IMR-90 (cell line): ENCODE measurements at regions of chr3 and their contacts with region 1.

Region 1: GRCh38 chr3:128170805-128171516 is 17.7 kb downstream of the EEFSEC start:
- DNase-seq: peak; percentile 83
- ATAC-seq: peak; percentile 93
- H3K4me3 ChIP-seq: no peak overlapping the region
- H3K27ac ChIP-seq: no peak overlapping the region
- H3K4me1 ChIP-seq: peaks cover 2% of the 10 kb centered on the region; the same call in 1 of the 2 replicates
- H3K27me3 ChIP-seq: no peaks in the 10 kb centered on the region
- CTCF ChIP-seq: peak; percentile 99
- POLR2A ChIP-seq: no peak
- RAD21 ChIP-seq: peak; percentile 94

Region 2: DNA sequence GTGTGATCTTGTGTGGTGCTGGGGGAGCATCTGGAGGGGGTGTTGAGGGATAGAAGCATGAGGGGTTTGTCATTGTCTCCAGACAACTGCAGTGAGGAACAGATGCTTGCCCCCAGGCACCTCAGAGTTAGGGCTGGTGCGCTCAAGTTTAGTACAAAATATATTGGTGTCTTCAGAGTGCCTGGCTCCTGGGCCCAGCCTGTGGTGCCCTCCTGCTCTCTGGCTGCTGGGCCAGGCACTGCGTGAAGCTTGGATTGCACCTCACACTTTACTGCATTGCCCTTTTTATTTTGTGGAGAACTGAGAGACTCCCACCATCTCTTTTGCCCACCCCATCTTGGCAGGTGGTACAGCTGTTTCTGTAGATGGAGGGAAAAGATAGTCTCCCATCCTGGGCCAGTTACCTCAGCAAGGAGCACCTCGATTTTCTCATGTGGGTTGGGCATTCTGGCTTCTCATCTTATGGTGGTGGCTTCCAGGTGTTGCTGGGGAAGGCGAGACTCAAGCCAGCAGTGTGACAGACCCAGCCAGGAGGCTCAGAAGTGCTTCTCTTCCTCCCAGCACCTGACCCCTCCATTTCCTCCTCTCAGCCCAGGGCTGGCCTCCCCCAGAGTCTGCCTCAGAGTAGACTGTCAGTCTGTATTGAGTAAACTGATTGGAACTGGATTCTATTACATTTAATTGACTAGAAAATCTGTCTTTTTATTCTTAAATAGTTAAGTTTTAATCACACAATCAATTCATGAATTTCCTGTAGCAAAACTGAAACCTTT is 155.3 kb after region 1 on chr3:
- CTCF ChIA-PET with region 1: interaction called, 7 read pairs
- POLR2A ChIA-PET with region 1: no interaction called
- dilution Hi-C with region 1: no loop called
- in situ Hi-C with region 1: no loop called
- intact Hi-C with region 1: loop called (anchors 2 kb)
- DNase-seq: no peak
- ATAC-seq: no peak
- H3K4me3 ChIP-seq: no peak overlapping the region
- H3K27ac ChIP-seq: no peak overlapping the region
- H3K4me1 ChIP-seq: no peaks in the 10 kb centered on the region
- H3K27me3 ChIP-seq: no peaks in the 10 kb centered on the region
- CTCF ChIP-seq: no peak
- POLR2A ChIP-seq: no peak
- RAD21 ChIP-seq: no peak

Region 3: GRCh38 chr3:128487813-128488635 is 317.1 kb after region 1 on chr3:
- CTCF ChIA-PET with region 1: no interaction called
- POLR2A ChIA-PET with region 1: no interaction called
- dilution Hi-C with region 1: no loop called
- in situ Hi-C with region 1: loop called (anchors 5 kb)
- intact Hi-C with region 1: no loop called
- DNase-seq: peak; percentile 87
- ATAC-seq: peak; percentile 83
- H3K4me3 ChIP-seq: peak overlapping the region; percentile 89
- H3K27ac ChIP-seq: peak overlapping the region; percentile 81
- H3K4me1 ChIP-seq: peaks cover 21% of the 10 kb centered on the region
- H3K27me3 ChIP-seq: peaks cover 30% of the 10 kb centered on the region; the same call in 1 of the 2 replicates
- CTCF ChIP-seq: no peak
- POLR2A ChIP-seq: peak; percentile 85
- RAD21 ChIP-seq: no peak

Region 4: GRCh38 chr3:128584412-128585020 is 413.6 kb after region 1 on chr3:
- CTCF ChIA-PET with region 1: interaction called, 5 read pairs
- POLR2A ChIA-PET with region 1: no interaction called
- dilution Hi-C with region 1: no loop called
- in situ Hi-C with region 1: no loop called
- intact Hi-C with region 1: loop called (anchors 1 kb)
- DNase-seq: peak; percentile 56
- ATAC-seq: peak; percentile 100
- H3K4me3 ChIP-seq: no peak overlapping the region
- H3K27ac ChIP-seq: no peak overlapping the region
- H3K4me1 ChIP-seq: no peaks in the 10 kb centered on the region
- H3K27me3 ChIP-seq: peaks cover 16% of the 10 kb centered on the region
- CTCF ChIP-seq: peak; percentile 80
- POLR2A ChIP-seq: no peak
- RAD21 ChIP-seq: peak; percentile 89

Region 5: DNA sequence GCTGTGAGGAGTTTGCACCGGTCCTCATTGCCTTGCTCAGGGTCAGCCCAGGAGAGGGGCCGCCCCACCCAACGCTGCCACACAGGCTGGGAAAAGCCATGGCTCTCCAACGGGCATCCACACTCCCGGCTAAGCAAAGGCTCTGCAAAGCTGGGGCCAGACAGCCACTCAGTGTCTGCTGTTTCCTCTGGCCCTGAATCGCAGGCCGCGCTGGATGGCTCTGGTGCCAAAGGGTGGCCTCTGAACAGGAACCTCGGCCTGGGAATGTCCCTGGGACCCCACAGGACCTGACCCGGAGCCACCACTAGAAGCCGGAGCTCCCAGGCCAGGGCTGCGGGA is 436.7 kb after region 1 on chr3:
- CTCF ChIA-PET with region 1: interaction called, 3 read pairs
- POLR2A ChIA-PET with region 1: no interaction called
- dilution Hi-C with region 1: no loop called
- in situ Hi-C with region 1: no loop called
- intact Hi-C with region 1: loop called (anchors 2 kb)
- DNase-seq: no peak
- ATAC-seq: no peak
- H3K4me3 ChIP-seq: no peak overlapping the region
- H3K27ac ChIP-seq: no peak overlapping the region
- H3K4me1 ChIP-seq: no peaks in the 10 kb centered on the region
- H3K27me3 ChIP-seq: no peaks in the 10 kb centered on the region
- CTCF ChIP-seq: no peak
- POLR2A ChIP-seq: no peak
- RAD21 ChIP-seq: no peak